HAP-1 (cell line): ENCODE measurements at regions of chr6 and their contacts with region 1.

Region 1: DNA sequence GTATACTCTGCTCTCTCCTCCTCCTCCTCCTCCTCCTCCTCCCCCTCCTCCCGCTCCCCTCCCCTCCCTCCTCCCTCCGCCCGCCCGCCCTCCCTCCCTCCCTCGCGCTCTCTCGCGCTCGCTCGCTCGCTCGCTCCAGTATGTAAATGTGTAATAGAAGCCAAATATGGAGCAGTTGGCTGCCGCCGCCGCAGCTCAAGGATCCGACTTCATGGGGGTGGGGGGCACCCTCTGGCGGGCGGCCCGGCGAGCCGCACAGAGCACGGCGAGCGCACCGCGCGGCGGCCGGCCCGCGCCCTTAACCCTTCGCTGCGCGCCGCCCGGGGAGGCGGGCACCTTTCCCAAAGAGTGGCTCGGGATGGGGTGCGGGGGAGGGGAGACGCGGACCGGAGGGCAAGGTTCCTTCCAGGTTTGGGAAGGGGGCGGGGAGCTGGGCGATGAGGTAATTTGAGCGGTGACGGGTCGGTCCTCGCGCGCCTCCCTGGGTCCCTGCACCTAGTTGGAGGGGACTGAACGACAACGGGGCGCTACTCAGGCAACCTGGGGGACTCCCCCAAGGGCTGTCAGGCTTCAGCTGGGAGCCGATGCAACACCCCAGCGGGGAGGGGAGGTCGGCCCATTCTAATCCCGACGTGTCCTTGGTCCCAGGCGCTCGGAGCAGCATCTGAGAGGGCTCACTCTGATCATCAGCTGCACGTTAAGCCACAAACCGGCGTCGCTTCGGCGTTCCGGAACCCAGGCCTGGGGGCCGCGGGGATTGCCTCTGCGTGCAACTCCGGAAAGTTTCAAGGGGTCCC is 409 bp upstream of the ATXN1 start:
- DNase-seq: peak; percentile 77 to 91
- H3K4me3 ChIP-seq: peak overlapping the region; percentile 58
- H3K4me1 ChIP-seq: peaks cover 33% of the 10 kb centered on the region
- H3K27me3 ChIP-seq: no peaks in the 10 kb centered on the region

Region 2: GRCh38 chr6:16332175-16332542 is 429.5 kb before region 1 on chr6:
- in situ Hi-C with region 1: loop called (anchors 10 kb)
- DNase-seq: peak; percentile 78 to 90
- H3K4me3 ChIP-seq: no peak overlapping the region
- H3K4me1 ChIP-seq: peaks cover 6% of the 10 kb centered on the region
- H3K27me3 ChIP-seq: no peaks in the 10 kb centered on the region

Region 3: DNA sequence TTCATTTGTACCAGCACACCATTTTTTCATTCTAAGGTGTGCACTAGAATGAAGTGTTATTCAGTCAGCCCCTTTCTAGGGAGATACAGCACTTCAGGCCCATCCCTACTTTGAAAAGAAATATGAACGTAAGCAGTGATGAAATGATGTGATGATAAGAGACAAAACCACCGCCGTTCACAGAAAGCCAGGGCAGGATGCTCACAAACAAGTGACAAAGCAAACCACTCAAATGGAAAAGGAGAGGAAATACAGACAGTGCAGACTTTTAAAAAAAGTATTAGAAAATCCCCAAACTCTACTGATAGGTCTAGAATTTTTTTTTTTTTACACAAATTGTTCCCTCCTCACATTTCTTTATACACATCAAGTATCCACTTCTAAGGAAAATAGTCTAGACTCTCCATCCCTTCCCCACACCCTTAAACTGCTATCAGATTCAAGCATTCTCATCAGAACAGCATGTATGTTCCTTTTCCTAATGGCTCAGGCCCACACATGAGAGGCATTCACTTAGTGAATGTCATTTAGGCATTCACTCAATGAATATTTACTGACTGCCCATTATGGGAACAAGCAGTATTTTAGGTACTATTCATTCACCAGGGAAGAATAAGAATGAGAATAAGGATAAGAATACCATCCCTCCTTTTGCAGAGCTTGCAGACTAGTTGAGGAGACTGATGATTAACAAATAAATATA is 279.8 kb before region 1 on chr6:
- in situ Hi-C with region 1: no loop called
- DNase-seq: no peak
- H3K4me3 ChIP-seq: no peak overlapping the region
- H3K4me1 ChIP-seq: no peaks in the 10 kb centered on the region
- H3K27me3 ChIP-seq: 0 out of 2 replicates have a peak, but pooled peaks cover 6% of the 10 kb centered on the region

Region 4: GRCh38 chr6:16514249-16514648 is 247.4 kb before region 1 on chr6:
- in situ Hi-C with region 1: loop called (anchors 10 kb)
- DNase-seq: peak; percentile 10 to 40
- H3K4me3 ChIP-seq: no peak overlapping the region
- H3K4me1 ChIP-seq: no peaks in the 10 kb centered on the region
- H3K27me3 ChIP-seq: no peaks in the 10 kb centered on the region

Region 5: DNA sequence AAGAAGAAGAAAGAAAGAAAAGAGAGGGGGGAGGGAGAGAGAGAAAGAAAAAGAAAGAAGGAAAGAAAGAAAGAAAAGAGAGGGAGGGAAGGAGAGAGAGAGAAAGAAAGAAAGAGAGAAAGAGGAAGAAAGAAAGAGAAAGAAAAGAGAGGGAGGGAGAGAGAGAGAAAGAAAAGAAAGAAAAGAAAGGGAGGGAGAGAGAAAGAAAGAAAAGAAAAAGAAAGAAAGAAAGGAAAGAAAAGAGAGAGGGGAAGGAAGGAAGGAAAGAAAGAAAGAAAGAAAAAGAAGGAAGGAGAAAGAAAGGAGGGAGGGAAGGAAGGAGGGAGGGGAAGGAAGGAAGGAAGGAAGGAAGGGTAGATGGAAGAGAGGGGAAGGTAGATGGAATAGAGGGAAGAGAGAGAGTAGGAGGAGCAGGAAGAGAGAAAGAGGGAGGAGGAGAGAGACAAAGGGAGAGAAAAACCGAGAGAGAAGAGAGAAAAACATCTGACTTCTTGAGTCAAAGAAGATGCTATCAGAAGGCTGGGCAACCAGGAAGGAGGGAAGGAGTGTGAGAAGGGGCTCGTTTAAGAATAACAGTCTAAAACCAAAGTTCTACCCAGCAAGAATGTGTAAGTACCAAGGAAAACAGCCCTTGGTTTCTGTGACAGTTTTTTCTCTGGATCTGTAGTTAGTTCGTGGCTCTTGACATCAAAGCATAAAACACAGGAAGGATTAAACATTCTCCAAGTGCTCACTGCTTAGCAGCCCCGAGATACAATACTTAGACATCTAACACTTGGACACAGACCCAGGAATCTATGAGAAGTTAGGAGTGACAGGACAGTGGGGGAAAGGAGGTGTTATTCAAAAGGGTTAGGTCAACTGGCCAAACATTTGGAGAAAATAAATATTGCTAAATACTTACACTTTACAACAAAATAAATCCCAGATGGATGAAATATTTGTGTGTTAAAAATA is 208.3 kb after region 1 on chr6:
- in situ Hi-C with region 1: no loop called
- DNase-seq: no peak
- H3K4me3 ChIP-seq: no peak overlapping the region
- H3K4me1 ChIP-seq: no peaks in the 10 kb centered on the region
- H3K27me3 ChIP-seq: peaks cover 25% of the 10 kb centered on the region